Dorsolateral prefrontal cortex (tissue), 120 donors: ENCODE measurements at regions of chr2 and their contacts with region 1.

Region 1: GRCh38 chr2:8681786-8682692 is at the start of gene ID2:
- DNase-seq: peak; percentile 98 to 99 (median 99)
- H3K4me3 ChIP-seq: peak within 1 kb of the TSS; percentile 63 to 93 (median 79)
- H3K27ac ChIP-seq: peak within 1 kb of the TSS; percentile 55 to 99 (median 95)
- H3K27me3 ChIP-seq: peaks cover 0 to 12% (median 0%) of the 10 kb centered on the region in 45 donors
- CTCF ChIP-seq: peak in 20 of 56 donors; percentile 6 to 42 (median 28)
- total RNA-seq, gene ID2: 73.4 to 233 (median 124) TPM

Region 2: GRCh38 chr2:7118606-7119503 is 1563.2 kb before region 1 on chr2:
- intact Hi-C with region 1: loop called in 1 of 2 experiments (anchors 5 kb)
- DNase-seq: peak in 5 of 10 donors; percentile 45 to 65 (median 63)
- H3K4me3 ChIP-seq: no peak overlapping the region
- H3K27ac ChIP-seq: peak overlapping the region in 33 of 59 donors; percentile 1 to 80 (median 58)
- H3K27me3 ChIP-seq: no peaks in the 10 kb centered on the region
- CTCF ChIP-seq: peak in 55 of 56 donors; percentile 33 to 74 (median 61)

Region 3: GRCh38 chr2:7338961-7339360 is 1343.1 kb before region 1 on chr2:
- intact Hi-C with region 1: no loop called
- DNase-seq: no peak
- H3K4me3 ChIP-seq: no peak overlapping the region
- H3K27ac ChIP-seq: no peak overlapping the region
- H3K27me3 ChIP-seq: no peaks in the 10 kb centered on the region
- CTCF ChIP-seq: no peak

Region 4: GRCh38 chr2:7427293-7428060 is 1254.6 kb before region 1 on chr2:
- intact Hi-C with region 1: loop called (anchors 1 to 2 kb)
- DNase-seq: no peak
- H3K4me3 ChIP-seq: no peak overlapping the region
- H3K27ac ChIP-seq: no peak overlapping the region
- H3K27me3 ChIP-seq: peaks cover 0 to 12% (median 0%) of the 10 kb centered on the region in 45 donors
- CTCF ChIP-seq: peak; percentile 58 to 90 (median 78)

Region 5: DNA sequence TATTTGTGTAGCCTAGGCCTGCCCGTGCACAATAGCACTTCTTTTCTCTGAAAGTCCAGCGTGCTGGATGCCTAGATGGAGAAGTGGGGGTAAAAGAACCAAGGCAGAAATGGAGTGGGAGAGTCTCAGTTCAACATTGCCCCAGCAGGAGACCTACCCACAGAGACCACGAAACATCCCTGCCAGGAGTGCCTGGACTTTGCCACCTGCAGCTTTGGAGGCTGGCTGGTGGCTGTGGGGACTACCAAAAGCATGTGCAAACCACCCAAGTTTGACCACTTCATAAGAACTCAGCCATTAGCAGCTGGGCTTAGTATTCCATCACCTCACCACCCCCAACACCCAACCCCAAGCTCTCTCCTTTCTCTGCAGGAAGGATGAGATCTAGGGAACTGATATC is 417.1 kb before region 1 on chr2:
- intact Hi-C with region 1: loop called in 1 of 2 experiments (anchors 5 kb)
- DNase-seq: no peak
- H3K4me3 ChIP-seq: no peak overlapping the region
- H3K27ac ChIP-seq: peak overlapping the region in 3 of 59 donors; percentile 17 to 28 (median 20)
- H3K27me3 ChIP-seq: peaks cover 0 to 16% (median 0%) of the 10 kb centered on the region in 45 donors
- CTCF ChIP-seq: no peak

Region 6: DNA sequence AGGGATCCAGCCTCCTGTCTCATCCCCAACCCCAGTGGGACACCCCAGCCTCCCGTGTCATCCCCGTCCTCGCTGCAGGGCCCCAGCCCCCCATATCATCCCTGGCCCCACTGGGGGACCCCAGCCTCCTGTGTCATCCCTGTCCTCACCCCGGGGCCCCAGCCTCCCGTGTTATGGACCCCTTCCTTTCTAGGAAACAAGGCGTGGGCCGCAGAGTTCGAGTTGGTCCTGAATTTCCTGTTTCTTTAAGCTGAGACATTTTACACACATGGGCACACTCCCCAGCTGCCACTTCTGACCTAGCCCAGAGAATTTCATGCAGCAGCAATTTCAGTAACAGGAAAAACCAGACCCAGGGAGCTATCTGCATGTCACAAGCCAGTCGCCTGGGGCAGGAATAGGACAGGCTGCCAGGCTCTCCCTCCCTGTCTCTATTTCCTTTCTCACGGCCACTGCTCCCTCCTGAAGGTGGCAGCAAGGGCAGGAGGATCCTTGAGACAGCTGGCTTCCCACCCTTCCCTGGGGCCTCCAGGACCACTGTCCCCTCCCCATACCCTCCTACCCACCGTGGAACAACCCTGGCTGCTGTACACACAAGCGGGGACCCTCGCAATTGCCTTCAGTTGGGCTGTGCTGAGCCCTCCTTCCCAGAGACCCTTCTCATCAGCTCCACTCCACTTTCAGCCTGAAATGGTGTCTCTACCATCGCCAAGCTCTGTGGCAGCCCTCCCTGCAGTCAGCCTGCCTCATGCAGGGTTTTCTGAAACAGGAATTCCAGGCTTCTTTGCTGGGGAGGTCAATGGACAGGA is 142.1 kb before region 1 on chr2:
- intact Hi-C with region 1: loop called in 1 of 2 experiments (anchors 10 kb)
- DNase-seq: no peak
- H3K4me3 ChIP-seq: no peak overlapping the region
- H3K27ac ChIP-seq: peak overlapping the region in 5 of 59 donors; percentile 4 to 55 (median 26)
- H3K27me3 ChIP-seq: no peaks in the 10 kb centered on the region
- CTCF ChIP-seq: peak in 3 of 56 donors; percentile 12 to 20 (median 13)

Region 7: DNA sequence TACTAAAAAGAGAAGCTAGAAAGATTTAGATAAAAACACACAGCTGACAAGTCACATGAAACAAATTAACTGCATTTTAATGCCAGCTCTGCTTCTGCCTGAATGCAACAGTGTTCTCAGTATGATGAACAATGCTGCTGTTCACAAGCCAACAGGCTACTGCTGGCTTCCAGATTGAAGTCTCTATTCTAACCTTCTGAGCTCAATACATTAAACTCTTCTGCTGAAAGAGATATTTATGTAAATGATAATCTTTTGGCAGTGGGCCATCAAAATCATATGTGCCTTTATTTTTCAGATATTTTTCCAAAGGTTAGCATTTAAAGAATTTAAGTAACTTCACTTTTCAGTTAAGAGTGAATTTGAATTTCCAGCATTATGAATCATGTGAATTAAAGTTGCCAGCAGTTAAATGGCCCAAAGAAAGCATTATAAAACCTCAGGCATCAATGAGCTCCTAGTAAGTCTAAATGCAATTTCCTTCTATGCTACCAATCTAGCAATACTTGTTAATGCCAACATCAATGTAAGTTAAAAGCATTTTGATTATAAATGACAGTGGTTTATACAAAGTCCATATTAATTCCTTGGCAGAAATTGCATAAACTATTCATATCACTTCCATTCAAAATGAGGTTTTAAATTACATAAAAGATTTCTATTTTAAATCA is 72.2 kb after region 1 on chr2:
- intact Hi-C with region 1: loop called in 1 of 2 experiments (anchors 2 kb)
- DNase-seq: peak in 5 of 10 donors; percentile 16 to 73 (median 39)
- H3K4me3 ChIP-seq: peak overlapping the region in 18 of 59 donors; percentile 0 to 48 (median 12)
- H3K27ac ChIP-seq: peak overlapping the region in 45 of 59 donors; percentile 1 to 81 (median 56)
- H3K27me3 ChIP-seq: no peaks in the 10 kb centered on the region
- CTCF ChIP-seq: peak in 17 of 56 donors; percentile 7 to 35 (median 18)

Region 8: DNA sequence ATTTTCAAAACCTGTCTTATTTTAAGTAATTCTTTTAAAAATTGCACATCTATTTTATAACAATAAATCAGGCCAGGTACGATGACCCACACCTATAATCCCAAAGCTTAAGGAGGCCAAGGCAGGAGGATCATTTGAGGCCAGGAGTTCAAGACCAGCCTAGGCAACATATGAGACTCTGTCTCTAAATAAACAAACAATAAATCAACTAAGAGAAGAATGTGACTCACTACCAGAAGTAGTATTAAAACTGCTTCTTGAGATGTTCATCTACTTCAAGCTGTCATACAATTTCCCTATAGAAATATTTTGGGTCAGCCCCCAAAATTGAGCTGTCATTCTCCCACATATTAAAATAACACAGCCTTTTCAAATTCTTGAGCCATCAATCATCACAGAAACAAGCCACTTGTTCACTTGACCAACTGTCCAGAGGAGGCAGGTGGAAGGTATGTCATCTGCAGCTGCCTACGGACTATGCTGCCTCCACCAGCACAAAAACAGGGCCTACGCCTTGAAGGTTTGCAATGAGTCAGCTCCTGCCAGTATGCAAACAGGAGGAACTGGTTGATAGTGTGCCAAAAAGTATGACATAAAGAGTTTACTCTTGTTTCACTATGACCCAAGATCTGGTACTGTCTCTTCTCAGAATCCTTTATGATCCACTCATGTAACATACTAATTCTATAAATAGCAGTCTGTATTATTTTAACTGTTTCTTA is 121.8 kb after region 1 on chr2:
- intact Hi-C with region 1: no loop called
- DNase-seq: no peak
- H3K4me3 ChIP-seq: no peak overlapping the region
- H3K27ac ChIP-seq: peak overlapping the region in 1 of 59 donors; percentile 2
- H3K27me3 ChIP-seq: no peaks in the 10 kb centered on the region
- CTCF ChIP-seq: no peak